ENCODE measurements at regions of chr6 and their contacts with region 1.

Region 1: GRCh38 chr6:11496152-11497060 is 41.1 kb upstream of the TMEM170B start:
- DNase-seq: no peak
- H3K4me3 ChIP-seq: no peak overlapping the region
- H3K27ac ChIP-seq: peak overlapping the region in 1 of 4 donors; percentile 56
- H3K4me1 ChIP-seq: peaks cover 4 to 18% (median 6%) of the 10 kb centered on the region in 3 donors
- H3K27me3 ChIP-seq: no peaks in the 10 kb centered on the region
- CTCF ChIP-seq: peak; percentile 73 to 96 (median 94)
- POLR2A ChIP-seq: no peak

Region 2: DNA sequence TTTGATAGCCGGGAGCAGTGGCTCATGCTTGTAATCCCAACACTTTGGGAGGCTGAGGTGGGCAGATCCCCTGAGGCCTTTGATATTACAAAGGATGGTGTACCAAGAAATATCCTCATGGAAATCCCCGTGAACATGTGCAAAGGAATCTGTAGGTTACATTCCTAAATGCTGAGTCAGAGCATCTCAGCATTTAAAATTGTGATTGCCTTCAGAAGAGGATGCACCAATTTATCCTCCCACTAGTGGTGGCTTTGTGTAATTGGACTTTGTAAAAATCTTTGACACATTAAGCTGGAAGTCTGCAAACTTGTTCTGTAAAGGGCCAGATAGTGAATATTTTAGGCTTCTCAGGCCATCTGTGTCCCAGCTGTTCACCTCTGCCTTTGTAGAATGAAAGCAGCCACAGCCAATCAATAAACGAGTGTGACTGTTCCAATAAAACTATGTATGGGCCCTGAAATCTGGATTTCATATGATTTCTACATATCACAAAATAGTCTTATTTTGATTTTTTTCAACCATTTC is 737.0 kb before region 1 on chr6:
- intact Hi-C with region 1: no loop called
- DNase-seq: no peak
- H3K4me3 ChIP-seq: no peak overlapping the region
- H3K27ac ChIP-seq: peak overlapping the region; percentile 74 to 84 (median 82)
- H3K4me1 ChIP-seq: peaks cover 3 to 37% (median 13%) of the 10 kb centered on the region in 3 donors
- H3K27me3 ChIP-seq: no peaks in the 10 kb centered on the region
- CTCF ChIP-seq: peak in 5 of 6 experiments; percentile 43 to 83 (median 54)
- POLR2A ChIP-seq: no peak

Region 3: GRCh38 chr6:11144393-11144851 is 352.0 kb before region 1 on chr6:
- intact Hi-C with region 1: loop called (anchors 5 kb)
- DNase-seq: peak; percentile 2
- H3K4me3 ChIP-seq: no peak overlapping the region
- H3K27ac ChIP-seq: peak overlapping the region in 2 of 4 donors; percentile 64 to 71
- H3K4me1 ChIP-seq: peaks cover 4 to 20% (median 7%) of the 10 kb centered on the region in 3 donors
- H3K27me3 ChIP-seq: no peaks in the 10 kb centered on the region
- CTCF ChIP-seq: peak; percentile 88 to 94 (median 90)
- POLR2A ChIP-seq: no peak

Region 4: DNA sequence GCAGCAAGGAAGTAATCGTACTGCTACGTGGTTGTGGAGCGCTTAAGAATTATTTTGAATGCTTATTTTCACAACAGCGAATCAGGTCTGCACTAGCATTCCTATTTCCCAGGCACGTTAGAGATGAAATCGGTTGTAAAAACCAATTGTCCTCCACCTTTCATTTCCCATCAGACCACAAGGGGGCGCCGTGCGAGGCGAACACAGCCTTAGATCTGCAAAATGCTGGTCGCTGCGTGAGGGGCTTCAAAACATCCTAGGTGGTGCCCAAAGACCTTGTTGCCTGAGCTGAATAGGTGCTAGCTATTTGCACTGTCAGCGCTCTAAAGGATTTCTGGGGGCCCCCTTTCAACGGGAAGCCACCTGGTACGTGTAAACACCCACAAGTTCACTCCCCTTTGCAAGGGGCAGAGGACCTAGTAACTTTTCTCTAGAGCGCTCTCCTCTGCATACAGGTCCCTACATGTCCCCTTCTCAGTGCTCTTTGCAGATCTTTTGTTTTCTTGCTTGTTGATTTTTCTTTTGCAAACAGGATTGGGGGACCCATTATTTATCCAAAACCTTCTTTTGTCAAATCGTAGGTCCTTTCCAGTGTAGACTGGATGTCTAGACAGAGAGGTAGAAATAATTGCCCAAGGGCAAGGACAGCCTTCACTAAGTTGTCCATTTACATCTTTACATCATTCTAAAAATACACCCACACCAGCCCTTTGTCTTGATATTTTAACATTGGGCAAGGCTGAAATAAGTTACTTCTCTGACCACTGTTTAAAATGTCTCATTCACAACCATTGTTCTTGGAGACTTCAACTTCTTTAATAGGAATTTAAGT is 323.7 kb before region 1 on chr6:
- intact Hi-C with region 1: loop called (anchors 10 kb)
- DNase-seq: no peak
- H3K4me3 ChIP-seq: peak overlapping the region in 1 of 4 donors; percentile 40
- H3K27ac ChIP-seq: no peak overlapping the region
- H3K4me1 ChIP-seq: peaks cover 0 to 9% (median 6%) of the 10 kb centered on the region in 3 donors
- H3K27me3 ChIP-seq: no peaks in the 10 kb centered on the region
- CTCF ChIP-seq: peak; percentile 70 to 85 (median 82)
- POLR2A ChIP-seq: no peak

Region 5: DNA sequence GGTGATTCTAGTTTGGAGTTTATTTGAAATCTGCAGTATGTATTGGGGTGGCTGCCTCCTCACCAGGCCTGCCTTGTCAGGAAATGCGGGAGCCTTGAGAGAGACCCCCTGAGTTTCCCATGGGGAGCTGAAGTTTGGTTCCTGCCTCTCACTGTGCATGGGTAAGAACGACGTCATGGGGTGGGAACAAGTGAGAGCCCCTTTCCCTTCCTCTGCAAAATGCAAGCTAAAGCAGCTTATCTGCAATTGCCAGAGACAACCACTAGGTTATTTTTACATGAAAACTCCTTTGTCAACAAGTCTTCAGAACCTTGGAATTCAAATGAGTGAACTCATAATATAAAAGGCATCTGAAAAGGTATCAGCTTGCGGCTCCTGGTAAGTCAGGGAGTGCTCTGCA is 99.5 kb after region 1 on chr6:
- intact Hi-C with region 1: no loop called
- DNase-seq: no peak
- H3K4me3 ChIP-seq: no peak overlapping the region
- H3K27ac ChIP-seq: no peak overlapping the region
- H3K4me1 ChIP-seq: peaks cover 0 to 5% (median 0%) of the 10 kb centered on the region in 3 donors
- H3K27me3 ChIP-seq: no peaks in the 10 kb centered on the region
- CTCF ChIP-seq: peak in 2 of 6 experiments; percentile 6 to 24
- POLR2A ChIP-seq: no peak

Measured in esophagus squamous epithelium (tissue), 5 donors.